ENCODE measurements at regions of chr5 and their contacts with region 1.

Region 1: DNA sequence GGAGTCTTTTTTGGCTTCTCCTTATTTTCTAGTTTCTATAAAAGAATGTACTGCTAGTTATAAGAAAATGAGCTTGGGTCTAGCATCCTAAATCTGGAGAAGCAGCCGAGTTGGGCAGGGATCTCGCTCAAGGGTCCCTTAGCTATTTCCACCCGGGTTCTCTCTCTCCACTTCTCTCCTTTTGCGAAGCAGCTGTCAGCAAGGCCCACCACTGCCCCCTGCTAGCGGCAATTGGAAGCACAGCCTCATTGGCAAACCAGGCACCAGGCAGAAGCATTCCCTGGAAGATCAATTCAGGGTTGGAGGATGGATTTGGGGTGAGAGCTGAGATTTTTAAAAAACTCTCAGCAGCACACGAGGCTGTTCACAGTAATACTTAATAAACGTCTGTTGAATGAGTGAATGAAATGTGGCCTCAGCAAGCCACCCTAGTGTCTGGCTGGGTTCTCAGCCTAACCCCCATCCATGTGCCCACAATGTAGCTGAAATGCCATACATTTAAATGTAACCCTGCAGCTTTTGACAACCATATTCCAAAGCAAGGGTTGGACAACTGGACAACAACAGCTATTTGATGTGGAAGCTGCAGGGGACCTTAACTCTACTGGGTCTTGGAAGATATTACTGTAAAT is 34.6 kb upstream of the TNIP1 start:
- DNase-seq: peak; percentile 81
- ATAC-seq: peak; percentile 93
- H3K4me3 Mint-ChIP-seq: no peak overlapping the region
- H3K27ac Mint-ChIP-seq: no peak overlapping the region
- H3K4me1 Mint-ChIP-seq: peaks cover 6% of the 10 kb centered on the region
- H3K27me3 Mint-ChIP-seq: no peaks in the 10 kb centered on the region
- CTCF ChIP-seq: peak; percentile 97

Region 2: GRCh38 chr5:150443242-150444075 is 671.9 kb before region 1 on chr5:
- CTCF ChIA-PET with region 1: no interaction called
- POLR2A ChIA-PET with region 1: no interaction called
- intact Hi-C with region 1: no loop called
- DNase-seq: no peak
- ATAC-seq: peak; percentile 22
- H3K4me3 Mint-ChIP-seq: no peak overlapping the region
- H3K27ac Mint-ChIP-seq: peak overlapping the region; percentile 73
- H3K4me1 Mint-ChIP-seq: peaks cover 30% of the 10 kb centered on the region
- H3K27me3 Mint-ChIP-seq: no peaks in the 10 kb centered on the region
- CTCF ChIP-seq: no peak

Region 3: DNA sequence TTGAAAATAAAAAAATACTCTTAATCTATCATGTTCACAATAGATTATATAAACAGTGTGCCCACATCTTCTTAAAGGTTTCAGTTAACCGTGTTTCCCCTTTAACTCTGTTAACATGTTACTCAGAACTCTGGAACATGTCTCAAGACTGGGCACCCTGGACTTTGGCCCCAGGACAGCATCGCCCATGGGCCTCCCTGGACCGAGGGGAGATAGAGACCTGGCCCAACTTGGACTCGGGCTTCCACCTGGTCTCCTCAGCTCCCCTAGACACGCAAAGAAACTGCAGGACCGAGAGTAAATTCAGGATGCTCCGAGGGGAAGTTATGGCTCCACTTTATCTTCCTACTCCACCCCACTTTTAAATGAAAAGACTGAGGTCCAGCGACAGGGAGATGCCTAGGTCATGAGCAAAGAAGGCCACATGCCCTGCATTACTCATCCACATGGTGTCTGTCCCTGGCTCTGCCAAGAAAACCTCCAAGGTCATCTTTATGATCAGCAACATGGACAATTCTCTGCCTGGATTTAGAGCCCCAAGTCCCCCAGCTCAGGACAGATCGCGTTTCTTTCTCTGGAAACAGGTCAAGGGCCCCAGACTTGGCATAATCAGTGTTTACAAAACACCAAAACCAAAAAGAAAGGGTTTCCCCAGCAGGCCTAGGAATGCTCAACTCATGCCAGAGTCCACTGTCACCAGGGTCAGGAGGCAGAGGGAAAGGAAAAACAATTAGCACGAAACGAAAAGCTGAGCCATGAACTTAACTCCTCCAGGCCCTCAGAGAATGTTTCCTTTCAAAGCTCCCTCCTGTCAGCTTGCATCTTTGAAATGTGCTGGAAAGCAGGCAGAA is 77.6 kb before region 1 on chr5:
- CTCF ChIA-PET with region 1: interaction called, 12 read pairs
- POLR2A ChIA-PET with region 1: interaction called, 3 read pairs
- intact Hi-C with region 1: no loop called
- DNase-seq: no peak
- ATAC-seq: no peak
- H3K4me3 Mint-ChIP-seq: no peak overlapping the region
- H3K27ac Mint-ChIP-seq: no peak overlapping the region
- H3K4me1 Mint-ChIP-seq: peaks cover 6% of the 10 kb centered on the region
- H3K27me3 Mint-ChIP-seq: no peaks in the 10 kb centered on the region
- CTCF ChIP-seq: no peak

Region 4: GRCh38 chr5:151075698-151076331 is 39.6 kb before region 1 on chr5:
- CTCF ChIA-PET with region 1: interaction called, 65 read pairs
- POLR2A ChIA-PET with region 1: interaction called, 3 read pairs
- intact Hi-C with region 1: no loop called
- DNase-seq: no peak
- ATAC-seq: no peak
- H3K4me3 Mint-ChIP-seq: peak overlapping the region; percentile 15
- H3K27ac Mint-ChIP-seq: peak overlapping the region; percentile 65
- H3K4me1 Mint-ChIP-seq: peaks cover 78% of the 10 kb centered on the region
- H3K27me3 Mint-ChIP-seq: no peaks in the 10 kb centered on the region
- CTCF ChIP-seq: no peak

Region 5: GRCh38 chr5:151101151-151101550 is 14.2 kb before region 1 on chr5:
- CTCF ChIA-PET with region 1: interaction called, 59 read pairs
- POLR2A ChIA-PET with region 1: interaction called, 3 read pairs
- intact Hi-C with region 1: no loop called
- DNase-seq: no peak
- ATAC-seq: no peak
- H3K4me3 Mint-ChIP-seq: no peak overlapping the region
- H3K27ac Mint-ChIP-seq: no peak overlapping the region
- H3K4me1 Mint-ChIP-seq: peaks cover 38% of the 10 kb centered on the region
- H3K27me3 Mint-ChIP-seq: no peaks in the 10 kb centered on the region
- CTCF ChIP-seq: no peak

Region 6: DNA sequence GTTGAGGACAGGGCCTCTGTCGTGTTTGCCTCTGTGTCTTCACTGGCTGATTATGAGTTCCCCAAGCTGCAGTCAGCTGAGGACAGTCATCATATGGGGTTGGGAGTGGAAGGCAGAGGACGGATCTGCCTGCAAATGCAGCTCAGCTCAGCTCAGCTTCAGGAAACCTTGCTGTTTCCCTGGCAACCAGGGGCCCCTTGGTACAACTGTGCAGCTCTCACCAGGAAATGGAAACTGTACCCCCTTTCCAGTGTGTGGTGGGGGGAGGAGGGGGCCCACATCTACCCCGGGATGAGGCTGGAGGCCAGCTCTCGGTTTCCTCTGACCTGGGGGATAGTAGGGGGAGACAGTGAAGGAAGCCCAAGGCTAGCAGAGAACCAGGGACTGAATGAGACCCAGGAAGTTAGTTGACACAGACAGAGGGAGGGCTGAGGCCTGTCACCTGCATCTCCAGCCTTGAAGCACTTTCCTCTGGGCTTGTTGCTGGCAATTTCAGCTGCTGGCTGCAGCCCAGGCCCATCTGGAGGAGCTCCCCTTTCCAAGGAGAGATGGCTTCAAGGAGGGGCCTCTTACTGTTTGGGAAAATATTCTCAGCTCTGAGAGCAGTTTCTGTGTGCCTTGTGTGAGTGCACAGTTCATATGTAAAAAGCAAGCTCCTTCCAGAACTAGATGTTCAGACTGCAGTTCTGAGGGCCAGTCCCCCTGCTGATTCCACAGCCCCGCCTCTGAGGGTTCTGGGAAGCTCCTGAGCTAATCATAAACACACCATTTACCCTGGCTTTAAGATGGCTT is 35.3 kb after region 1 on chr5:
- CTCF ChIA-PET with region 1: interaction called, 18 read pairs
- POLR2A ChIA-PET with region 1: interaction called, 3 read pairs
- intact Hi-C with region 1: no loop called
- DNase-seq: peak; percentile 90
- ATAC-seq: peak; percentile 63
- H3K4me3 Mint-ChIP-seq: peak overlapping the region; percentile 49
- H3K27ac Mint-ChIP-seq: peak overlapping the region; percentile 89
- H3K4me1 Mint-ChIP-seq: peaks cover 92% of the 10 kb centered on the region
- H3K27me3 Mint-ChIP-seq: no peaks in the 10 kb centered on the region
- CTCF ChIP-seq: no peak

Region 7: DNA sequence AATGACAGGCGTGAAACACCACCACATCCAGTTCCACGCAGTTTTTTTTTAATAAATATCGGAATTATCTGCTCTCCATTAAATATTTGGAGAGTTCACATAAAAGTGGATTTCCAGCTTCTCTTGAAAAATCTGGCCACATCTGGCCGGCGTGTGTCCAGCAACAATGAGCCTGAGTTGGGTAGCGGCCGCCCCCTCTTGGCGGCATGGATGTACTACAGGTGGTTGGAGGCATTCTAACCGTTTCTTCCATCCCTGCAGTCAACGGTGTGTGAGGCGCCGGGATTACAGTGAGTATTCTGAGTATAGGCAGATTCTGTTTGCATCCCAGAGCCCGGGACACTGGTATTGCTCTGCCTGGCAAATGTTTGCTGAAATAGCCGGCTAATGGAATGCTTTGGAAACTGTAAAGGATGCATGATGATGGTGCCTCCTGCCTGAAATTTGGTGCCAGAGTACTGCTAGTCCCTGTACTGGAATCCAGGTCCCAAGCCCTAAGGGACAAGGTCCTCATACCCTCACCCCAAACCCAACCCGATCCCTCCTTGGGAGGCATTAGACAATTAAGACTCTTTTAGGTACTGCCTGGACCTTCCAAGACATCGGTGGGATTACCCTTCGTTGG is 124.0 kb after region 1 on chr5:
- CTCF ChIA-PET with region 1: interaction called, 16 read pairs
- POLR2A ChIA-PET with region 1: no interaction called
- intact Hi-C with region 1: no loop called
- DNase-seq: peak; percentile 78
- ATAC-seq: peak; percentile 85
- H3K4me3 Mint-ChIP-seq: peak overlapping the region; percentile 21
- H3K27ac Mint-ChIP-seq: peak overlapping the region; percentile 13
- H3K4me1 Mint-ChIP-seq: peaks cover 37% of the 10 kb centered on the region
- H3K27me3 Mint-ChIP-seq: no peaks in the 10 kb centered on the region
- CTCF ChIP-seq: peak; percentile 98